ENCODE measurements at regions of chr11 and their contacts with region 1.

Region 1: GRCh38 chr11:123478352-123478987 is 48.4 kb downstream of the GRAMD1B start:
- DNase-seq: peak; percentile 61 to 72 (median 63)
- ATAC-seq: peak; percentile 85
- H3K4me3 ChIP-seq: no peak overlapping the region
- H3K27ac ChIP-seq: no peak overlapping the region
- H3K4me1 ChIP-seq: no peaks in the 10 kb centered on the region
- H3K27me3 ChIP-seq: 0 out of 5 replicates have a peak, but pooled peaks cover 0 to 4% of the 10 kb centered on the region in 2 experiments
- CTCF ChIP-seq: peak; percentile 66 to 88 (median 75)
- EP300 ChIP-seq: no peak
- POLR2A ChIP-seq: no peak
- RAD21 ChIP-seq: peak; percentile 75

Region 2: GRCh38 chr11:122863704-122864326 is 614.7 kb before region 1 on chr11:
- CTCF ChIA-PET with region 1: no interaction called
- POLR2A ChIA-PET with region 1: no interaction called
- in situ Hi-C with region 1: no loop called
- intact Hi-C with region 1: loop called (anchors 2 kb)
- DNase-seq: peak; percentile 30 to 42 (median 36)
- ATAC-seq: peak; percentile 67; the same call in 2 of the 3 replicates
- H3K4me3 ChIP-seq: no peak overlapping the region
- H3K27ac ChIP-seq: no peak overlapping the region
- H3K4me1 ChIP-seq: no peaks in the 10 kb centered on the region
- H3K27me3 ChIP-seq: no peaks in the 10 kb centered on the region; a peak in 1 of 5 replicates
- CTCF ChIP-seq: peak; percentile 59 to 77 (median 62); a peak in 5 of 6 replicates
- EP300 ChIP-seq: no peak
- POLR2A ChIP-seq: no peak
- RAD21 ChIP-seq: peak; percentile 58 to 60

Region 3: GRCh38 chr11:123103326-123103980 is 375.0 kb before region 1 on chr11:
- CTCF ChIA-PET with region 1: no interaction called
- POLR2A ChIA-PET with region 1: no interaction called
- in situ Hi-C with region 1: loop called (anchors 25 kb)
- intact Hi-C with region 1: no loop called
- DNase-seq: peak; percentile 29 to 47 (median 33)
- ATAC-seq: peak; percentile 79
- H3K4me3 ChIP-seq: no peak overlapping the region
- H3K27ac ChIP-seq: no peak overlapping the region
- H3K4me1 ChIP-seq: no peaks in the 10 kb centered on the region; a peak in 1 of 5 replicates
- H3K27me3 ChIP-seq: peaks cover 30 to 55% of the 10 kb centered on the region in 2 experiments
- CTCF ChIP-seq: peak; percentile 47 to 65 (median 61)
- EP300 ChIP-seq: no peak
- POLR2A ChIP-seq: no peak
- RAD21 ChIP-seq: peak; percentile 23 to 57; a peak in 2 of 4 replicates

Region 4: GRCh38 chr11:123110356-123110755 is 368.1 kb before region 1 on chr11:
- CTCF ChIA-PET with region 1: interaction called, 4 read pairs
- POLR2A ChIA-PET with region 1: no interaction called
- in situ Hi-C with region 1: loop called (anchors 25 kb)
- intact Hi-C with region 1: loop called (anchors 2 kb)
- DNase-seq: no peak
- ATAC-seq: no peak
- H3K4me3 ChIP-seq: no peak overlapping the region
- H3K27ac ChIP-seq: no peak overlapping the region
- H3K4me1 ChIP-seq: no peaks in the 10 kb centered on the region; a peak in 1 of 5 replicates
- H3K27me3 ChIP-seq: peaks cover 21 to 34% of the 10 kb centered on the region in 2 experiments; a peak in 3 of 5 replicates
- CTCF ChIP-seq: no peak
- EP300 ChIP-seq: no peak
- POLR2A ChIP-seq: no peak
- RAD21 ChIP-seq: no peak

Region 5: DNA sequence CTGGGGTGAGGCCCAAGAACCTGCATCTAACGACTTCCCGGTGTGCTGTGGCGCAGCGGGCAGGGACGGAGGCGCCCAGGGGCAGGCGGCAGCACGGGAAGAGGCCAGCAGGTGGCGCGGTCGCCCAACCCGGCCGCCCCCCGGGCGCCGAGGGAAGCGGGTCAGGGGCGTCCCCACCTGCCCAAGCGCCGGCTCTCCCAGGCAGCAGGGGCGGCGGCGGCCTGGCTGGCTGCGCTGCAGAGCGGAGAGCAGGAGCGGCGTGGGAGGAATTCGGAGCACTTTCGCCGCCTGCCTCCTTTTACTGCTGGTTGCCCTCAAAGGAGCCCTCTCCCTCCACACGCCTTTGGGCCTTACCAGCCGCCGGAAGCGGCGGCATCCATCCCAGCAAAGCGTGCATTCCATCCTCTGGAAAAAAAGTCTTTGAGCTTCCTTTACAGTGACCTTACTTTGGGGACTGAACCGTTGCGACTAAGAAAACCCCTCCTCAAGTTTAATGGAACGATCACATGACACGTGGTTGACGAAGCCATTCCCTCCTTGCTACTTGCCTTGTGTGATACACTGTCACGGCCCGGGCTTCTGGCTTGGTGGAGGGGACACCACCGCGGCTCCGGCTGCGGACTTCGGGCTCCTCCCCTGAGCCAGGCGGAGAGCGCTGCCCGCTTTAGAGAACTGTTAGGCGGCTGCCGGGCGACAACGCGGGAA is 176.6 kb before region 1 on chr11:
- CTCF ChIA-PET with region 1: no interaction called
- POLR2A ChIA-PET with region 1: no interaction called
- in situ Hi-C with region 1: loop called (anchors 10 kb)
- intact Hi-C with region 1: loop called (anchors 1 kb)
- DNase-seq: peak; percentile 41 to 77 (median 69)
- ATAC-seq: peak; percentile 97
- H3K4me3 ChIP-seq: no peak overlapping the region
- H3K27ac ChIP-seq: no peak overlapping the region
- H3K4me1 ChIP-seq: peaks cover 0 to 9% of the 10 kb centered on the region in 2 experiments; a peak in 1 of 5 replicates
- H3K27me3 ChIP-seq: peaks cover 0 to 25% of the 10 kb centered on the region in 2 experiments; a peak in 2 of 5 replicates
- CTCF ChIP-seq: peak; percentile 57 to 80 (median 70)
- EP300 ChIP-seq: no peak
- POLR2A ChIP-seq: no peak
- RAD21 ChIP-seq: peak; percentile 21 to 54; a peak in 2 of 4 replicates

Region 6: DNA sequence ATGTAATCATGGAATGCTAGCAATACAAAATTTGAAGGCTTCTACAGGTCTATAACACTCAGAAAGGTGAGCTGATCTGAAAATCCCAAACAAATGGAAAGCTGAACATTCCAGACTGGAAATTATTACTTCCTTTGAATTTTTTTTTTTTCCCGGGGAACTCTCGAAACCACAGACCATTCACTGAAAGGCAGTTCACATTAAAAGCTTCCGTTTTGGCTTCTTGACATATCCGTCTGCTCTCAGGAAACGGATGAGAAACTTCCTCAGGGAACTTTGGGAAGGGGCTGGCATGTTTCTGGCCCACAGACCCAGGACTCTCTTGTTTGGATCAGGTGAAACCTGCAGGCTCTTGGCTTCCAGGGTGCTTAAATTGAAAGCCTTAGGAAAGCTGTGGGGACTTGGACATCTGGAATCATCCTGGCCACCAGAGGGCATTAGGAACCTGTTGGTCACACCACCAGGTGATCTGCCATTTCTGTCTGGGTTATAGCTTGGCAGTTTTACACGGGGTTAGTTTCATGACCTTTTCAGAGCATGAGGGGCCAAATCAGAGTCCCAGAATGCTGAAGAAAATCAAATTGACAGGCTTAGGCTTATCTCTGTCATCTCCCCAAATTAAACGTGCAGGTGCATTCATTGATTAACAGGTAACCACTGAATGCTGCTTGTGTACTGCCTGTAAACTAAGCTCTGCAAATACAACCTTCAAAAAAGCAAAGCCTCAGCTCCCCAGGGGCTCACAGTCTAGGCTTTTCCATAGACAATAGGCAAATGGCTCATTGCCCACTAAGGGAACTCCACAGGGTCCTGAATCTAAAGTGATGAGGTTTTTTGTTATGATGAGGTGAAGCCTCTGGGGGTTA is 71.1 kb before region 1 on chr11:
- CTCF ChIA-PET with region 1: interaction called, 10 read pairs
- POLR2A ChIA-PET with region 1: interaction called, 4 read pairs
- in situ Hi-C with region 1: no loop called
- intact Hi-C with region 1: loop called (anchors 1 kb)
- DNase-seq: peak; percentile 21 to 53 (median 32)
- ATAC-seq: peak; percentile 83
- H3K4me3 ChIP-seq: no peak overlapping the region
- H3K27ac ChIP-seq: no peak overlapping the region
- H3K4me1 ChIP-seq: no peaks in the 10 kb centered on the region
- H3K27me3 ChIP-seq: peaks cover 0 to 11% of the 10 kb centered on the region in 2 experiments; a peak in 2 of 5 replicates
- CTCF ChIP-seq: peak; percentile 56 to 65 (median 63)
- EP300 ChIP-seq: no peak
- POLR2A ChIP-seq: no peak
- RAD21 ChIP-seq: peak; percentile 49 to 63